Endothelial cell of umbilical vein (primary cell): ENCODE measurements at regions of chr15 and their contacts with region 1.

Region 1: DNA sequence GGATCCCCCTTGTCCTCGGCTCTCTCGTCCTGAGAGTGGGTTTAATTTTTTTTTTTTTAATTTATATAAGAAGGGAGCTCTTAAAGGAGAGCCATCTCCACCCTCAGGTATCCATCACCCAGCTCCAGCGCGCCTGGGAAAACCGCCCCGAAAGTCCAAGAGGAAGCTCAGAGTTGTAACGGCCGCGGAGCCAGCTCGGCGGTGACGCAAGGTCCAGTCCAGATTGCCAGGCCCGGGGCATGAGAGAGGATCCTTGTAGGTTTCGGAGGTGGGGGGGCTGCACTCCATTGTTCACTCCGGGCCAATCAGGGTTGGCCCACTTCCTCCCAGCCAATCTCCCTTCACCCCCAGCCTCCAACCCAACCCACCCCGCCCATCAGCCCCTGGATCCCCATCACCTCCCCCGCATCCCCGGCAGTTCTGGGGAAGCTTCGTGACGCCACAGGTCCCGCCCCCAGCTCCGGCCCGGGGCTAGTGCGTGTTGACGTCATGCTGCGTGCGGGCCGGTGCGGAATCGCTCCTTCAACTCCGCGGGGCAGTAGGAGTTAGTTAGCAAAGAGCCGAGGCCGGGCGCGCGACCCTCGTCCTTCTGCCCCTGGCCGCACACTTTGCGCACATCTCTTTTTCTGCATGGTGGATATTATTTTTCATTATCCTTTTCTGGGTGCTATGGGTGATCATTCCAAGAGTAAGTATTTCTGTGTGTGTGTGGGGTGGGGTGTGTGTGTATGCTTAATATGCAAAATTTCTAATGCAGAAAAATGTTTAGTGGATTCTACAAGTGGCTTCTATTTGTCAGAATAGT is at the start of gene ISL2:
- DNase-seq: peak; percentile 60
- H3K4me3 ChIP-seq: peak within 1 kb of the TSS in 2 of 3 experiments; percentile 28 to 52
- H3K27ac ChIP-seq: no peak within 1 kb of the TSS
- H3K4me1 ChIP-seq: peaks cover 20% of the 10 kb centered on the region
- H3K27me3 ChIP-seq: peaks cover 54 to 74% of the 10 kb centered on the region in 2 experiments
- CTCF ChIP-seq: no peak
- POLR2A ChIP-seq: peak; percentile 32
- total RNA-seq, gene ISL2: not detected in 2 replicates

Region 2: DNA sequence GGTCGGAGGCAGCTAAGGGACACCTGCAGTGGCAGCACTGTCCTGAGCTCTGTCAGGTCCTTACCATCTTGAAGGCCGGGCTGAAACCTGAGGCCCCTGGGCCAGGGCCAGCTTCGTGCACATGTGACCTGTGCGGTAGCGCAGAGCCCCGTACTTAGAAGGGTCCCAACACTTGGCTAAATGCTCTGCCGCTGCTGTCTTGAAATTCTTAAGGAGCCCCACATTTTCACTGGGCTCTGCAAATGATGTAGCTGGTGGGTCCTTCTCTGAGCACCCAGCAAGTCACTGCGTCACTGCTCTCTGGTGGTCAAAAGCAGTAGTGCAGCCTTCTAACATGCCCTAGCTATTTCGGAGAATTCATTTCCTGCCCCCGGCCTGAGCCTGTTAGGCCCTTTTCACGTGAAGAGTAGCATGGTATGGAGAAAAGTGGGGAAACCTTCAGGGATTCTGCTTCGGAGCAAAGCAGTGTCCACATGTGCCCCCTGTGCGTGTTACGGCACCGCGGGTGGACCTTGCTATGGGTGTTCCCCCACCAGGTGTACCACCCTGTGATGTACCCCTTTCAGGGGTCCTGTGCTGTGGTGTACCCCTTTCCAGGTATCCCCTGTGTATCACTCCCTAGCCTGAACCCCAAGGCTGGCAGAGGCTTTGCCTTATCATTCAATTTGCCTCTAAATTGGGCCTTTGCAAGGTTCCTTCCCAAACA is 196.9 kb before region 1 on chr15:
- CTCF ChIA-PET with region 1: no interaction called
- POLR2A ChIA-PET with region 1: no interaction called
- dilution Hi-C with region 1: no loop called
- intact Hi-C with region 1: no loop called
- DNase-seq: peak; percentile 70
- H3K4me3 ChIP-seq: peak overlapping the region in 1 of 3 experiments; percentile 0
- H3K27ac ChIP-seq: no peak overlapping the region
- H3K4me1 ChIP-seq: peaks cover 10% of the 10 kb centered on the region
- H3K27me3 ChIP-seq: peaks cover 2 to 8% of the 10 kb centered on the region in 2 experiments
- CTCF ChIP-seq: peak; percentile 88 to 94
- POLR2A ChIP-seq: no peak

Region 3: DNA sequence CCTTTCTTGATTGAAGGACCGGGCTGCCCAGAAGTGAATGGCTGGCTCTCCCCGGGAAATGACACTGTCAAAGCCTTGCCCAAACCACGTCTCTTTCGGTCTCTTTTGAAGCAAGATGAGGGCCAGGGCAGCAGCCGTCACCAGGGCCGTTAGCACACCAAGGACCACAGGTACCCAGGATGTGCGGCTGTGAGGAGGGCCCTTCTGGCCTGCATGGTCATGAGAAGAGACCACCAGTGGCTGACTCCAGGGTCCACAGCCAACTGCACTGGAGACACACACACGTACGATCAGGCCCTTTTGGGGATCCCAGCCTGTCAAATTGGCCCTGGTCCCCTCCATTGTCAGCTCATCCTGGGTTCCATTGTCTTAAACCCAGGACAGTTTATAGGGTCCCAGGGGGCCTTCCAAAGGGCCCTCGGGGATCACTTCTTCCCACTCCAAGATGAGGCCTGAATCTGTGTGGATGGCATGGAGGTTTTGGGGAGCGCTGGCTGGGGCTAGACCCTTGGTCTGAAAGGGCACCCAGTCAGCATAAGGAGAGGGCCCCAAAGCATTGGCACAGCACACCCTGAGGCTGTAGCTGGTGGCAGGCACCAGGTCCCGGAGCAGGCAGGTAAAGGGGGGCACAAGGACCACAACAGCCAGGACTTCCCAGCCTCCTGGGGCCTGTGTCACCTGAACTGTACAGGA is 76.1 kb before region 1 on chr15:
- CTCF ChIA-PET with region 1: no interaction called
- POLR2A ChIA-PET with region 1: no interaction called
- dilution Hi-C with region 1: no loop called
- intact Hi-C with region 1: no loop called
- DNase-seq: no peak
- H3K4me3 ChIP-seq: no peak overlapping the region
- H3K27ac ChIP-seq: no peak overlapping the region
- H3K4me1 ChIP-seq: no peaks in the 10 kb centered on the region
- H3K27me3 ChIP-seq: no peaks in the 10 kb centered on the region
- CTCF ChIP-seq: no peak
- POLR2A ChIP-seq: no peak

Region 4: GRCh38 chr15:76274226-76274625 is 62.2 kb before region 1 on chr15:
- CTCF ChIA-PET with region 1: no interaction called
- POLR2A ChIA-PET with region 1: no interaction called
- dilution Hi-C with region 1: no loop called
- intact Hi-C with region 1: no loop called
- DNase-seq: peak; percentile 79
- H3K4me3 ChIP-seq: no peak overlapping the region
- H3K27ac ChIP-seq: peak overlapping the region; percentile 11
- H3K4me1 ChIP-seq: peaks cover 5% of the 10 kb centered on the region
- H3K27me3 ChIP-seq: no peaks in the 10 kb centered on the region
- CTCF ChIP-seq: no peak
- POLR2A ChIP-seq: no peak

Region 5: GRCh38 chr15:76311100-76311953 is 25.1 kb before region 1 on chr15 and contains the start of gene ETFA:
- CTCF ChIA-PET with region 1: interaction called, 3 read pairs
- POLR2A ChIA-PET with region 1: interaction called, 3 read pairs
- dilution Hi-C with region 1: no loop called
- intact Hi-C with region 1: loop called (anchors 1 kb)
- DNase-seq: peak; percentile 95
- H3K4me3 ChIP-seq: peak within 1 kb of the TSS; percentile 82 to 86 (median 84)
- H3K27ac ChIP-seq: peak within 1 kb of the TSS; percentile 78
- H3K4me1 ChIP-seq: peaks cover 19% of the 10 kb centered on the region
- H3K27me3 ChIP-seq: no peaks in the 10 kb centered on the region
- CTCF ChIP-seq: no peak
- POLR2A ChIP-seq: peak; percentile 88
- total RNA-seq, gene ETFA: 116 and 123 TPM in 2 replicates

Region 6: DNA sequence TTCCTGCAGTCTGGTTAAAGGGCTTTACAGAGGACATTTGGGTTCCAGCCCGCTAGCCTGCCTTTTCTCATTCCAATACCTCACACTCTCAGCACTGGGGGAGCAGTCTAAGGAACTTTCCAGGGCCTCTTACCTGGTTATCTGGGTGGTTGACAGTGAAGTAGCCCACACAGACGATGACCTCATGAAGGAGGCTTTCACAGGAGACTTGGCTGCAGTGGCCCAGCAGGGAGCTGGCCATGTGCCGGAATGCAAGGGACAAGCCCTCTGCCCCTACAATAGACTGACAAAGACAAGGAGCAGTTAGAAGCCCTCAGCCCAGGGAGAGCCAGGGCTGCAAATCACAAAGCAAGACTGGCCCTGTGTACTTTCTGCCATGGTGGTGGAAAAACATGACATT is 39.6 kb after region 1 on chr15:
- CTCF ChIA-PET with region 1: no interaction called
- POLR2A ChIA-PET with region 1: no interaction called
- dilution Hi-C with region 1: no loop called
- intact Hi-C with region 1: no loop called
- DNase-seq: no peak
- H3K4me3 ChIP-seq: no peak overlapping the region
- H3K27ac ChIP-seq: no peak overlapping the region
- H3K4me1 ChIP-seq: peaks cover 11% of the 10 kb centered on the region
- H3K27me3 ChIP-seq: no peaks in the 10 kb centered on the region
- CTCF ChIP-seq: no peak
- POLR2A ChIP-seq: no peak

Region 7: GRCh38 chr15:76866716-76867321 is 530.4 kb after region 1 on chr15:
- CTCF ChIA-PET with region 1: interaction called, 5 read pairs
- POLR2A ChIA-PET with region 1: no interaction called
- dilution Hi-C with region 1: no loop called
- intact Hi-C with region 1: loop called (anchors 10 kb)
- DNase-seq: peak; percentile 64
- H3K4me3 ChIP-seq: no peak overlapping the region
- H3K27ac ChIP-seq: no peak overlapping the region
- H3K4me1 ChIP-seq: no peaks in the 10 kb centered on the region
- H3K27me3 ChIP-seq: no peaks in the 10 kb centered on the region
- CTCF ChIP-seq: peak; percentile 15 to 33
- POLR2A ChIP-seq: no peak